IMR-90 (cell line): ENCODE measurements at regions of chr15 and their contacts with region 1.

Region 1: GRCh38 chr15:77107531-77108355 is 36.8 kb upstream of the TSPAN3 start:
- DNase-seq: peak; percentile 60
- ATAC-seq: peak; percentile 82
- H3K4me3 ChIP-seq: no peak overlapping the region
- H3K27ac ChIP-seq: no peak overlapping the region
- H3K4me1 ChIP-seq: peaks cover 8% of the 10 kb centered on the region
- H3K27me3 ChIP-seq: no peaks in the 10 kb centered on the region
- CTCF ChIP-seq: peak; percentile 65
- POLR2A ChIP-seq: no peak
- RAD21 ChIP-seq: peak; percentile 79

Region 2: GRCh38 chr15:77024271-77025082 is 83.3 kb before region 1 on chr15:
- CTCF ChIA-PET with region 1: interaction called, 4 read pairs
- POLR2A ChIA-PET with region 1: no interaction called
- dilution Hi-C with region 1: no loop called
- in situ Hi-C with region 1: no loop called
- intact Hi-C with region 1: loop called (anchors 2 kb)
- DNase-seq: peak; percentile 27
- ATAC-seq: peak; percentile 74
- H3K4me3 ChIP-seq: no peak overlapping the region
- H3K27ac ChIP-seq: no peak overlapping the region
- H3K4me1 ChIP-seq: peaks cover 12% of the 10 kb centered on the region
- H3K27me3 ChIP-seq: no peaks in the 10 kb centered on the region; the same call in 1 of the 2 replicates
- CTCF ChIP-seq: peak; percentile 87
- POLR2A ChIP-seq: no peak
- RAD21 ChIP-seq: peak; percentile 81

Region 3: GRCh38 chr15:77034695-77035489 is 72.9 kb before region 1 on chr15:
- CTCF ChIA-PET with region 1: no interaction called
- POLR2A ChIA-PET with region 1: no interaction called
- dilution Hi-C with region 1: no loop called
- in situ Hi-C with region 1: no loop called
- intact Hi-C with region 1: no loop called
- DNase-seq: no peak
- ATAC-seq: peak; percentile 38; the same call in 1 of the 2 replicates
- H3K4me3 ChIP-seq: no peak overlapping the region
- H3K27ac ChIP-seq: no peak overlapping the region
- H3K4me1 ChIP-seq: 0 out of 2 replicates have a peak, but pooled peaks cover 2% of the 10 kb centered on the region
- H3K27me3 ChIP-seq: no peaks in the 10 kb centered on the region
- CTCF ChIP-seq: peak; percentile 45
- POLR2A ChIP-seq: no peak
- RAD21 ChIP-seq: peak; percentile 44

Region 4: DNA sequence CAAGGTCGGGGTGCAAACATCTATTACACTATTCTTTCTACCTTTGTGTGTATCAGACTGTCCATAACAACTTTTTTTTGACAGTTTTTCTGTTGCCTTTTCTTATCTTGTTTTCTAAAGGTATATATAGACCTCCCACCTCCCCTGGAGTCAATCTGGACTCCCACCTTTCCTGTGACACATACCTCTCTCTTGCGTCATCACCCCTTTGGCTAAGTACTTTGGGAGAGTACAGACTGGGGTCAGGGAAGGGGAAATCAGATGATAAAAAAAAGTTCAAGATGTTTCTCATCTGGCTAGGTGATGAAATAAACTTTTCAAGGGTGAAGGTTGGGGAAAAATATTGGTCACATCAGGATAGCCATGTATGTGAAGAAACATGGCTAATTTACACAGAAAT is 54.0 kb before region 1 on chr15:
- CTCF ChIA-PET with region 1: no interaction called
- POLR2A ChIA-PET with region 1: no interaction called
- dilution Hi-C with region 1: no loop called
- in situ Hi-C with region 1: no loop called
- intact Hi-C with region 1: no loop called
- DNase-seq: no peak
- ATAC-seq: no peak
- H3K4me3 ChIP-seq: no peak overlapping the region
- H3K27ac ChIP-seq: no peak overlapping the region
- H3K4me1 ChIP-seq: peaks cover 6% of the 10 kb centered on the region
- H3K27me3 ChIP-seq: no peaks in the 10 kb centered on the region
- CTCF ChIP-seq: no peak
- POLR2A ChIP-seq: no peak
- RAD21 ChIP-seq: no peak